Mammary epithelial cell (primary cell): ENCODE measurements at regions of chr5 and their contacts with region 1.

Region 1: GRCh38 chr5:113294311-113295110 is 140.3 kb downstream of the TSSK1B start:
- DNase-seq: peak; percentile 79
- H3K4me3 ChIP-seq: peak overlapping the region; percentile 64 to 77 (median 71)
- H3K27ac ChIP-seq: peak overlapping the region; percentile 70
- H3K4me1 ChIP-seq: peaks cover 18% of the 10 kb centered on the region
- H3K27me3 ChIP-seq: no peaks in the 10 kb centered on the region
- CTCF ChIP-seq: peak in 1 of 2 donors; percentile 28

Region 2: GRCh38 chr5:113050721-113051382 is 243.7 kb before region 1 on chr5:
- CTCF ChIA-PET with region 1: no interaction called
- dilution Hi-C with region 1: no loop called
- in situ Hi-C with region 1: no loop called
- intact Hi-C with region 1: loop called (anchors 5 kb)
- DNase-seq: peak; percentile 82
- H3K4me3 ChIP-seq: no peak overlapping the region
- H3K27ac ChIP-seq: peak overlapping the region; percentile 41
- H3K4me1 ChIP-seq: peaks cover 41% of the 10 kb centered on the region
- H3K27me3 ChIP-seq: no peaks in the 10 kb centered on the region
- CTCF ChIP-seq: no peak

Region 3: DNA sequence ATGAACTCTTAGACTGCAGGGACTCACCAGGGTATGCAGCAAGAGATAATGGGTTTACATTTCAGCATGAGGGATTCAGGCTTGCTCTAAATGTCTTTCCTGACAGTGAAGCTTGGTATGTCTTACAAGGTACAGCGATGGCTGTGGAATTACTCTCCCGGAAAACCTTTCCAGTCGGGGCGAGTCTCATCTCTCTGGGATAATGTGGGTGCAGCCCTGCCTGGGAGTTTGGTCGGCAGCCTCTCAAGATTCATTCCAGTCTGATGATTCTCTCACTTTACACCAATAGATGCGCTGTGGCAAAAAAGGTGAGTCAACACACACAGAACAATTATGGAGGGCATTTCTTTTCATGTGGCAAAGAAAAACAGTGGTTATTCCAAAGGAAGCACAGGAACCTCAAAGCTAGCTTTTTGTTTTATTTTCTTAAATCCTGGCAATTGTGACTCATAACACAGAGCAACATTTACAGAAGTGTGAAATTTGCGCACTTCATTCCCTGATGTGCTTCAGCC is 127.6 kb before region 1 on chr5:
- CTCF ChIA-PET with region 1: no interaction called
- dilution Hi-C with region 1: no loop called
- in situ Hi-C with region 1: no loop called
- intact Hi-C with region 1: loop called (anchors 1 kb)
- DNase-seq: peak; percentile 97
- H3K4me3 ChIP-seq: no peak overlapping the region
- H3K27ac ChIP-seq: peak overlapping the region; percentile 74
- H3K4me1 ChIP-seq: peaks cover 75% of the 10 kb centered on the region
- H3K27me3 ChIP-seq: no peaks in the 10 kb centered on the region
- CTCF ChIP-seq: no peak

Region 4: GRCh38 chr5:113212244-113212920 is 82.1 kb before region 1 on chr5:
- CTCF ChIA-PET with region 1: no interaction called
- dilution Hi-C with region 1: no loop called
- in situ Hi-C with region 1: no loop called
- intact Hi-C with region 1: loop called (anchors 5 kb)
- DNase-seq: no peak
- H3K4me3 ChIP-seq: no peak overlapping the region
- H3K27ac ChIP-seq: no peak overlapping the region
- H3K4me1 ChIP-seq: peaks cover 17% of the 10 kb centered on the region
- H3K27me3 ChIP-seq: no peaks in the 10 kb centered on the region
- CTCF ChIP-seq: no peak

Region 5: DNA sequence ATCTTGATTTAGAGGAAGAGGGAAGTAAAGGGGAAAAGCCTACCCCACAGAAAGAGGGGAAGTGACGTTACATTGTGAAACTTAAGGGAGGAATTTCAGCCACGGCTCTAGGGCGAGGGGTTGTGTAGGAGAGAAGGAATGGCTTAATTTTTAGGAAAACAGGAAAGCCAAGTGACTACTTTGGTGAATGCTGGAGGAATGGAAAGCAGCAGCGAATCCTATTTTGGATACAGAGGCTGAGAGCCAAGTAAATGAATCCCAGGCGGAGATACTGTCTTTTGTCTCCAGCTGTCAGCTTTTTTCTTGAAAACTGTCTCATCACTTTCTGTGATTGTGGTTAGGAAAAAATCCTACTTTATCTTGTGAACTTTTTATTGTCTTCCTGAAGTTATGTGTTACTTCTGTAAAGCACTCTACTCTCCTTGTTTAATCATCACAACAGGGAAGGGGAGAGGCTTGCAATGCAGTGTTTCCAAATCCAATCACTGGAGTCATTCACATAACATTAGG is 48.1 kb before region 1 on chr5:
- CTCF ChIA-PET with region 1: no interaction called
- dilution Hi-C with region 1: no loop called
- in situ Hi-C with region 1: no loop called
- intact Hi-C with region 1: loop called (anchors 1 kb)
- DNase-seq: no peak
- H3K4me3 ChIP-seq: no peak overlapping the region
- H3K27ac ChIP-seq: no peak overlapping the region
- H3K4me1 ChIP-seq: peaks cover 37% of the 10 kb centered on the region
- H3K27me3 ChIP-seq: no peaks in the 10 kb centered on the region
- CTCF ChIP-seq: no peak